Activated CD4-positive, alpha-beta T cell treated with anti-CD3 and anti-CD28 coated beads for 36 hours (primary cell): ENCODE measurements at regions of chr6 and their contacts with region 1.

Region 1: DNA sequence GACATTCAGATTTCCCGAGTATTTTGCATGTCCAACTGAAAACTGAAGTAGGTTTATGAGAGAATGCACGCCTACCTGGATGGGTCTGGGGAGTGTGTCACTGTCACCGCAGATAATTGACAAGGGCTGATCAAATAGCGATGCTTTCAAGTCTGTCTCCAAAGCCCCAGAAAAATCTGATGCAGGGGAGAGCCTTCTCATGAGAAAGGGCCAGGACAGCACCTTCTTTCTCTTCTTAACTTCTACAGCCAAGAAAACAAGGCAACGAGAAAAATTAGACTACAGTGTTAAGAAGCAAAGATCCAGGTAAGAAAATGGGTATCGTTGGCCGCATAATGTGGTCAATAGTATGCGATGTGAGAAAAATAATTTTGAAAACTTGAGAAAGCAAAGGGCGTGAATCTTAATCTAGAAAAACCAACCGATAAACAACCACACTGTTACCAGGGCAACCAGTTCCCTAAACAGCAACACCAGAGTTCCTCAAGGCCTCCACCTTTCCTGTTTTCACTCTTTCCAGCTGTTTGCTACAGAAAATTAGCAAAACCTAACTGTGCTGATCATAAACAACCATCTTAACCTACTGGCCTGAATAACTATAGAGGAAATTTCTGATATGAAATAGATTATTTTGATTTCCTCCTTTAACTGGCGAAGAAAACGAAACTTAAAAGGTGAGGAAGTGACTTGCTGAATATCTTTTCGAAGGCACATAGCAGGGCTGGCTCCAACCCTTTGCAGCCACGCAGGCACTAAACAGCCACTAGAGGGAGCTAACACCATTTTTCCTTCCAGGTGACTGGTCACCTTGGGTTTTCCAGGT is 2.6 kb downstream of the TAGAP start:
- DNase-seq: peak; percentile 84
- ATAC-seq: peak; percentile 39
- H3K4me3 Mint-ChIP-seq: peak overlapping the region; percentile 87
- H3K27ac Mint-ChIP-seq: peak overlapping the region; percentile 97
- H3K4me1 Mint-ChIP-seq: peaks cover 71% of the 10 kb centered on the region
- H3K27me3 Mint-ChIP-seq: no peaks in the 10 kb centered on the region

Region 2: GRCh38 chr6:158853072-158853871 is 188.9 kb before region 1 on chr6:
- CTCF ChIA-PET with region 1: no interaction called
- POLR2A ChIA-PET with region 1: no interaction called
- intact Hi-C with region 1: loop called in 1 of 2 experiments (anchors 5 kb)
- DNase-seq: peak; percentile 94
- ATAC-seq: peak; percentile 83
- H3K4me3 Mint-ChIP-seq: no peak overlapping the region
- H3K27ac Mint-ChIP-seq: no peak overlapping the region
- H3K4me1 Mint-ChIP-seq: peaks cover 29% of the 10 kb centered on the region
- H3K27me3 Mint-ChIP-seq: no peaks in the 10 kb centered on the region

Region 3: GRCh38 chr6:159017757-159018559 is 24.3 kb before region 1 on chr6:
- CTCF ChIA-PET with region 1: interaction called, 31 read pairs
- POLR2A ChIA-PET with region 1: interaction called, 21 read pairs
- intact Hi-C with region 1: loop called (anchors 1 kb)
- DNase-seq: no peak
- ATAC-seq: peak; percentile 92
- H3K4me3 Mint-ChIP-seq: no peak overlapping the region
- H3K27ac Mint-ChIP-seq: peak overlapping the region; percentile 81
- H3K4me1 Mint-ChIP-seq: peaks cover 64% of the 10 kb centered on the region
- H3K27me3 Mint-ChIP-seq: no peaks in the 10 kb centered on the region

Region 4: GRCh38 chr6:159062564-159062945 is 20.3 kb after region 1 on chr6:
- CTCF ChIA-PET with region 1: interaction called, 23 read pairs
- POLR2A ChIA-PET with region 1: interaction called, 11 read pairs
- intact Hi-C with region 1: loop called (anchors 1 kb)
- DNase-seq: peak; percentile 73
- ATAC-seq: peak; percentile 77
- H3K4me3 Mint-ChIP-seq: peak overlapping the region; percentile 35
- H3K27ac Mint-ChIP-seq: peak overlapping the region; percentile 94
- H3K4me1 Mint-ChIP-seq: peaks cover 99% of the 10 kb centered on the region
- H3K27me3 Mint-ChIP-seq: no peaks in the 10 kb centered on the region

Region 5: DNA sequence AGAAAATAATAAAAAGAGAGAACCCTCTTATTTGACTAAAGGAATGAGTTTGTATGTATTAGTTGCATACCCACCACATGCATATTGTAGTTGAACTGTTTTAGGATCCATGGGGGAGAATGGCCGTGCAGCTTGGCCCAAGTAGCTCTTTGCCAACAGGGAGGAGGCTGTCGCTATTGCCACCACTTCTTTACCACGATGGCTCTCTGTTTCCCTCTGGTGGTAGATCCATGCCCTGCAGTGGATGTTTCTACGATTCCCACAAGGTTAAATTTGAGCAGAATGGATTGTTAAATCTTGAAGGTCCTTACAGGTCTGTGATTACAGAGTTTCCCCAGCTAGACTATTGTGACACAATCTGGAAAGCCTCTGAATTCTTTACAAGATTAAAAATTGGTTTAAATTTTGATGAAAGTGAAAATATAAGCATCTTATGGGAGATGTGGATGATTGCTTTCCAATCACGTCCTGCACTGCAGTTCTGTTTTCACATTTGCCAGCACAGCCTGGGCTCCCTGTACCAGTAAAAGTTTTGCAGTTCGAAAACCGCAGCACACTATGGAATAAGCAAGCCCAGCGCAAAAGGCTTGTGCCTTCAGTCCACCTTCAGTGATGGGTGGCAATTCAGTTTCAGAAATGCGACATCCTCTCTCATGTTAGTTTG is 92.6 kb after region 1 on chr6:
- CTCF ChIA-PET with region 1: interaction called, 9 read pairs
- POLR2A ChIA-PET with region 1: no interaction called
- intact Hi-C with region 1: loop called in 1 of 2 experiments (anchors 1 kb)
- DNase-seq: peak; percentile 85
- ATAC-seq: peak; percentile 94
- H3K4me3 Mint-ChIP-seq: no peak overlapping the region
- H3K27ac Mint-ChIP-seq: no peak overlapping the region
- H3K4me1 Mint-ChIP-seq: no peaks in the 10 kb centered on the region
- H3K27me3 Mint-ChIP-seq: peaks cover 5% of the 10 kb centered on the region